ENCODE measurements at regions of chr22 and their contacts with region 1.

Region 1: GRCh38 chr22:28424427-28425080 is 255.1 kb downstream of the TTC28 start:
- DNase-seq: peak; percentile 82
- ATAC-seq: peak; percentile 72
- H3K4me3 ChIP-seq: no peak overlapping the region
- H3K27ac ChIP-seq: no peak overlapping the region
- H3K4me1 ChIP-seq: peaks cover 32% of the 10 kb centered on the region
- H3K27me3 ChIP-seq: no peaks in the 10 kb centered on the region
- CTCF ChIP-seq: no peak
- EP300 ChIP-seq: peak in 1 of 2 experiments; percentile 43; a peak in 1 of 4 replicates
- POLR2A ChIP-seq: no peak
- RAD21 ChIP-seq: no peak

Region 2: GRCh38 chr22:28171115-28171514 is 253.4 kb before region 1 on chr22:
- CTCF ChIA-PET with region 1: no interaction called
- POLR2A ChIA-PET with region 1: no interaction called
- in situ Hi-C with region 1: no loop called
- intact Hi-C with region 1: loop called (anchors 2 kb)
- DNase-seq: no peak
- ATAC-seq: no peak
- H3K4me3 ChIP-seq: no peak overlapping the region
- H3K27ac ChIP-seq: no peak overlapping the region
- H3K4me1 ChIP-seq: no peaks in the 10 kb centered on the region
- H3K27me3 ChIP-seq: no peaks in the 10 kb centered on the region
- CTCF ChIP-seq: no peak
- EP300 ChIP-seq: no peak
- POLR2A ChIP-seq: no peak
- RAD21 ChIP-seq: no peak

Measured in HepG2 (cell line).